GM23248 (cell line): ENCODE measurements at regions of chr10 and their contacts with region 1.

Region 1: DNA sequence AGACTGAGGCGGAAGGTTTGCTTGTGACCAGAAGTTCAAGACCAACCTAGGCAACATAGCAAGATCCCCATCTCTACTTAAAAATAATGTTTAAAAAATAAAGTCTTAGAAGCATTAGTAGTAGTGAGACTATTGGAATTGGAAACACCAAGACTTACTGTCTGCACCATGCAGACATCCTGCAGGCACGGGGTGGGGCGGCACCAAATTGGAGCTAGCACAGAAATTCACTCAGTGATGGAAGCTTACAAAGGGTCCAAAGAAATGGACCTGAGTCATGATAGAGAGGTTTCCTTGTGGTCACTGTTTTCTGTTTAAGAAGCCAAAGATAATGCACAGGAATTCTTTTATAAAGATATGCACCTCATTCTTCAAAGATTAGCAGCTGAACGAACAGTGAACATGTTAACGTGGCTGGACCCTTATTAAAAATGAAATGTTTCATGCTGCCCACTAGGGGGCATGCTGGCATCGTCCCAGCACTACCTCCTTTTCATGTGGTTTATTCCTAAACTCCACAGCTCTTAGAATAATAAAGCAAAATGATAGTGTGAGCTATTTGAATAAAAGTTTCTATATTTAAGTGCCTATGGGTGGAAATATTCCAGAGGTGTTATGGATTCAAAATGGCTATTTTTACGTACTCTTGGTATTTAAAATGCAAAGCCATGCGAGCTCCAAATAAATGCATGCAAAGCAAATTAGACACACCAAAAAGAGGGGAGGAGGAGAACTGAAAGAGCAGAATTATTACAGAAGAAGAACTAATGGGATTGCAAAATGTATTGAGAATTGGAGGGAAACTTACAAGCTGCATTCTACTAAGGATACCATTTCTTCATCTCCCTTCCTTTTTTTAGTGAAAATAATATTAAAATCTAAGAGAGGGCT is 28.6 kb downstream of the PDSS1 start:
- DNase-seq: peak; percentile 68
- H3K4me3 ChIP-seq: no peak overlapping the region
- H3K27ac ChIP-seq: no peak overlapping the region
- H3K4me1 ChIP-seq: no peaks in the 10 kb centered on the region
- H3K27me3 ChIP-seq: no peaks in the 10 kb centered on the region

Region 2: GRCh38 chr10:26869528-26869927 is 143.4 kb after region 1 on chr10:
- in situ Hi-C with region 1: loop called (anchors 5 kb)
- DNase-seq: peak; percentile 18
- H3K4me3 ChIP-seq: no peak overlapping the region
- H3K27ac ChIP-seq: no peak overlapping the region
- H3K4me1 ChIP-seq: no peaks in the 10 kb centered on the region
- H3K27me3 ChIP-seq: no peaks in the 10 kb centered on the region

Region 3: GRCh38 chr10:26881600-26882331 is 155.7 kb after region 1 on chr10:
- in situ Hi-C with region 1: no loop called
- DNase-seq: peak; percentile 80
- H3K4me3 ChIP-seq: 0 out of 2 replicates have a peak overlapping the region, but pooled peaks have one; percentile 24
- H3K27ac ChIP-seq: no peak overlapping the region
- H3K4me1 ChIP-seq: no peaks in the 10 kb centered on the region
- H3K27me3 ChIP-seq: no peaks in the 10 kb centered on the region; the same call in 1 of the 2 replicates